ENCODE measurements at regions of chr22 and their contacts with region 1.

Region 1: GRCh38 chr22:41800348-41801146 is at the start of gene CCDC134:
- DNase-seq: peak; percentile 74
- ATAC-seq: peak; percentile 98
- H3K4me3 ChIP-seq: peak within 1 kb of the TSS; percentile 71 to 92 (median 86)
- H3K27ac ChIP-seq: peak within 1 kb of the TSS; percentile 87
- H3K4me1 ChIP-seq: peaks cover 37% of the 10 kb centered on the region
- H3K27me3 ChIP-seq: no peaks in the 10 kb centered on the region; a peak in 1 of 5 replicates
- CTCF ChIP-seq: peak; percentile 17; the same call in 1 of the 2 replicates
- EP300 ChIP-seq: no peak
- POLR2A ChIP-seq: peak; percentile 96
- RAD21 ChIP-seq: no peak; the same call in 1 of the 2 replicates
- total RNA-seq, gene CCDC134: 11.3 and 17.4 TPM in 2 replicates

Region 2: GRCh38 chr22:41697126-41697775 is 103.3 kb before region 1 on chr22:
- CTCF ChIA-PET with region 1: no interaction called
- POLR2A ChIA-PET with region 1: interaction called, 13 read pairs
- in situ Hi-C with region 1: no loop called
- intact Hi-C with region 1: no loop called
- DNase-seq: peak; percentile 81
- ATAC-seq: peak; percentile 91
- H3K4me3 ChIP-seq: peak overlapping the region; percentile 45 to 66 (median 53); a peak in 4 of 6 replicates
- H3K27ac ChIP-seq: no peak overlapping the region
- H3K4me1 ChIP-seq: peaks cover 16% of the 10 kb centered on the region
- H3K27me3 ChIP-seq: no peaks in the 10 kb centered on the region
- CTCF ChIP-seq: peak; percentile 96
- EP300 ChIP-seq: no peak
- POLR2A ChIP-seq: 0 out of 4 replicates have a peak, but pooled peaks of 1 of the 2 experiments have one; percentile 21
- RAD21 ChIP-seq: peak; percentile 93

Region 3: GRCh38 chr22:41742916-41743315 is 57.6 kb before region 1 on chr22:
- CTCF ChIA-PET with region 1: no interaction called
- POLR2A ChIA-PET with region 1: no interaction called
- in situ Hi-C with region 1: no loop called
- intact Hi-C with region 1: no loop called
- DNase-seq: no peak
- ATAC-seq: peak; percentile 86
- H3K4me3 ChIP-seq: no peak overlapping the region
- H3K27ac ChIP-seq: no peak overlapping the region
- H3K4me1 ChIP-seq: no peaks in the 10 kb centered on the region
- H3K27me3 ChIP-seq: peaks cover 0 to 12% of the 10 kb centered on the region in 2 experiments; a peak in 2 of 5 replicates
- CTCF ChIP-seq: no peak
- EP300 ChIP-seq: no peak
- POLR2A ChIP-seq: no peak
- RAD21 ChIP-seq: no peak

Region 4: GRCh38 chr22:41780746-41781505 is 19.6 kb before region 1 on chr22:
- CTCF ChIA-PET with region 1: no interaction called
- POLR2A ChIA-PET with region 1: interaction called, 31 read pairs
- in situ Hi-C with region 1: no loop called
- intact Hi-C with region 1: no loop called
- DNase-seq: peak; percentile 56
- ATAC-seq: peak; percentile 79
- H3K4me3 ChIP-seq: no peak overlapping the region; a peak in 1 of 6 replicates
- H3K27ac ChIP-seq: no peak overlapping the region
- H3K4me1 ChIP-seq: 0 out of 2 replicates have a peak, but pooled peaks cover 7% of the 10 kb centered on the region
- H3K27me3 ChIP-seq: peaks cover 0 to 4% of the 10 kb centered on the region in 2 experiments; a peak in 3 of 5 replicates
- CTCF ChIP-seq: no peak
- EP300 ChIP-seq: no peak
- POLR2A ChIP-seq: no peak
- RAD21 ChIP-seq: no peak

Region 5: GRCh38 chr22:41822317-41823060 is 21.9 kb after region 1 on chr22:
- CTCF ChIA-PET with region 1: no interaction called
- POLR2A ChIA-PET with region 1: interaction called, 13 read pairs
- in situ Hi-C with region 1: no loop called
- intact Hi-C with region 1: no loop called
- DNase-seq: peak; percentile 62
- ATAC-seq: peak; percentile 54
- H3K4me3 ChIP-seq: no peak overlapping the region
- H3K27ac ChIP-seq: no peak overlapping the region
- H3K4me1 ChIP-seq: no peaks in the 10 kb centered on the region
- H3K27me3 ChIP-seq: no peaks in the 10 kb centered on the region
- CTCF ChIP-seq: peak; percentile 64
- EP300 ChIP-seq: no peak
- POLR2A ChIP-seq: no peak
- RAD21 ChIP-seq: peak; percentile 63

Region 6: GRCh38 chr22:41832553-41833368 is 32.2 kb after region 1 on chr22 and contains the start of gene SREBF2:
- CTCF ChIA-PET with region 1: no interaction called
- POLR2A ChIA-PET with region 1: interaction called, 45 read pairs
- in situ Hi-C with region 1: no loop called
- intact Hi-C with region 1: no loop called
- DNase-seq: peak; percentile 99
- ATAC-seq: peak; percentile 89
- H3K4me3 ChIP-seq: peak within 1 kb of the TSS; percentile 79 to 96 (median 80)
- H3K27ac ChIP-seq: peak within 1 kb of the TSS; percentile 96
- H3K4me1 ChIP-seq: peaks cover 55% of the 10 kb centered on the region
- H3K27me3 ChIP-seq: no peaks in the 10 kb centered on the region; a peak in 1 of 5 replicates
- CTCF ChIP-seq: peak; percentile 36; the same call in 1 of the 2 replicates
- EP300 ChIP-seq: peak in 1 of 2 experiments; percentile 90; a peak in 3 of 4 replicates
- POLR2A ChIP-seq: peak; percentile 79 to 82
- RAD21 ChIP-seq: peak; percentile 23; the same call in 1 of the 2 replicates
- total RNA-seq, gene SREBF2: 30.2 and 53.8 TPM in 2 replicates

Region 7: GRCh38 chr22:41946629-41947423 is 146.3 kb after region 1 on chr22 and contains the start of gene CENPM:
- CTCF ChIA-PET with region 1: no interaction called
- POLR2A ChIA-PET with region 1: interaction called, 11 read pairs
- in situ Hi-C with region 1: no loop called
- intact Hi-C with region 1: no loop called
- DNase-seq: peak; percentile 94
- ATAC-seq: peak; percentile 94
- H3K4me3 ChIP-seq: peak within 1 kb of the TSS; percentile 53 to 79 (median 66)
- H3K27ac ChIP-seq: peak within 1 kb of the TSS; percentile 76
- H3K4me1 ChIP-seq: peaks cover 74% of the 10 kb centered on the region
- H3K27me3 ChIP-seq: no peaks in the 10 kb centered on the region
- CTCF ChIP-seq: no peak; the same call in 1 of the 2 replicates
- EP300 ChIP-seq: no peak
- POLR2A ChIP-seq: peak; percentile 67 to 69
- RAD21 ChIP-seq: no peak
- total RNA-seq, gene CENPM: 37.3 and 41.8 TPM in 2 replicates